Left cardiac atrium (tissue), 4 donors: ENCODE measurements at regions of chr17 and their contacts with region 1.

Region 1: GRCh38 chr17:65556014-65556909 is 5.2 kb downstream of the AXIN2 start:
- DNase-seq: peak; percentile 86
- ATAC-seq: peak; percentile 23 to 33

Region 2: DNA sequence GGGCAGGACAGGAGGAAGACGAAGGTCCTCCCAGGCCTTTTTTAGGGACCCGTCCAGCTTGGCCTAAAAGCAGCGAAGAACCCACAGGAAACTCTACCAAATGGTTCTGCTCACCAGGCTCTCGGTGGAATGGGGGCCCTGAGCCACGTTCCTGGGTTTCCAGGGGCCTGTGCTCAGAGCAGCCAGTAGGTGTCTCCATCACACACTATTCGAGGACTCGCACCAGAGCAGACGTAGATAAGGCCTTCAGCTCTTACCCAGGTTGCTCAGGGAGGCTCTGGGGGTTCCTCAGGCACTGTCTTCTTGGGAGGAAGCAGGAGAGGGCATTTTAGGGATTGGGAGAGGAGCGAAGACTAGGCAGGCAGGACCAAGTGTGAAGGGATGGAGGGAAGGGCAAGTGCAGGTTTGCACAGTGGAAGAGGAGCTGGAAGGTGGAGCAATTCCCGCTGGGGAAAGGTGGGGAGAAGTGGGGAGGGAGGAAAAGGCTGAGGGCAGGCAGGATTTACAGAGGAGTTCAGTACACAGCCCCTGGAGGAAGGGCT is 262.0 kb before region 1 on chr17:
- intact Hi-C with region 1: loop called in 1 of 2 experiments (anchors 5 kb)
- DNase-seq: peak; percentile 60
- ATAC-seq: peak; percentile 89 to 95

Region 3: GRCh38 chr17:65463242-65463641 is 93.0 kb before region 1 on chr17:
- intact Hi-C with region 1: loop called (anchors 2 to 10 kb)
- DNase-seq: peak; percentile 87
- ATAC-seq: peak; percentile 98 to 99

Region 4: GRCh38 chr17:65638221-65638975 is 82.1 kb after region 1 on chr17:
- intact Hi-C with region 1: no loop called
- DNase-seq: no peak
- ATAC-seq: peak in 1 of 2 donors; percentile 25

Region 5: GRCh38 chr17:65707780-65708179 is 151.5 kb after region 1 on chr17:
- intact Hi-C with region 1: no loop called
- DNase-seq: no peak
- ATAC-seq: peak in 1 of 2 donors; percentile 39